GM12878 (cell line): ENCODE measurements at regions of chr1 and their contacts with region 1.

Region 1: DNA sequence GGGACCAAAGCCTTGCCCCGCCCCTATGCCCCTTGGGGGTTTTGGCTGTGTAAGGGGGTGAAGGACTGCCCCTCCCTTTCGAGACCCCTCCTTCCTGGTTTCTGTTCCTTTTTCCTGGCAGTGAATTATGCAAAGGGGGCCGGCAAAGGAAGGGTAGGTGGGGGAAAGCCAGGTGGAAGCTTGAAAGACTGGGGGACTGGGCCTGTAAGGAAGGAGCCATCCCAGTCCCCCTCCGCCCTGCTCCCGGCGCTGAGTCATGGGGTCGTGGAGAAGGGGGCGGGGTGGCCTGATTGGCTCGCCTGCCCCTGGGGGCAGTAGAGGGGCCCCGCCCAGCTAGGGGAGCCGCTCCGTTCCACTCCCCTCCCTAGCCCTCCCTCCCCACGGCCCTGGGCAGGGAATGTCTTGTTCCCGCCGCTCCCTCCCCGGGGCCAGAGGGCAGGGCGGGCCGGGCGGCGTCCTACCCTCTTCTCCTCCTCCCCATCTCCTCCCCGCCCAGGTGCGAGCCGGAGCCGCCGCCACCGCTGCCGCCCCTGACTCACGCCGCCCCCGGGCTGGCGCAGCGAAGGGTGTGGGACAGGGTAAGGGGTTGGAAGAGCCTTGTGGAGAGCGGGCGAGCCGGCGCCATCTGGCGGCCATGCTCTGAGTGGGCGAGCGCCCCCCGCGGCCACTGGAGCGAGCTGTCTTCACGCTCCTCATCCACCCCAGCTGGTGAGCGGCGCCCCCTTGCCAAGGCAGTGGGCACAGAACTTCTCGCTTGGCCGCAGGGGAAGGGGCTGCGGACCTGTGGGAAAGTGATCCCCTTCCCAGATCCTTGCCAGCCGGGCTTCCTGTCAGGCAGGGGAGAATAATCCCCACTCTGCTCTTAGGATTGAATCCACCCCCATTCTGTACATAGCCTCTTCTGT is 14.7 kb downstream of the ZBTB7B start:
- DNase-seq: peak; percentile 47
- ATAC-seq: peak; percentile 98
- H3K4me3 ChIP-seq: peak overlapping the region; percentile 65
- H3K27ac ChIP-seq: peak overlapping the region; percentile 75
- H3K4me1 ChIP-seq: peaks cover 23% of the 10 kb centered on the region
- H3K27me3 ChIP-seq: no peaks in the 10 kb centered on the region
- CTCF ChIP-seq: peak; percentile 99 to 100 (median 100); a peak in 5 of 6 replicates
- EP300 ChIP-seq: 0 out of 4 replicates have a peak, but pooled peaks of 1 of the 2 experiments have one; percentile 26
- POLR2A ChIP-seq: peak; percentile 69
- RAD21 ChIP-seq: peak; percentile 64

Region 2: DNA sequence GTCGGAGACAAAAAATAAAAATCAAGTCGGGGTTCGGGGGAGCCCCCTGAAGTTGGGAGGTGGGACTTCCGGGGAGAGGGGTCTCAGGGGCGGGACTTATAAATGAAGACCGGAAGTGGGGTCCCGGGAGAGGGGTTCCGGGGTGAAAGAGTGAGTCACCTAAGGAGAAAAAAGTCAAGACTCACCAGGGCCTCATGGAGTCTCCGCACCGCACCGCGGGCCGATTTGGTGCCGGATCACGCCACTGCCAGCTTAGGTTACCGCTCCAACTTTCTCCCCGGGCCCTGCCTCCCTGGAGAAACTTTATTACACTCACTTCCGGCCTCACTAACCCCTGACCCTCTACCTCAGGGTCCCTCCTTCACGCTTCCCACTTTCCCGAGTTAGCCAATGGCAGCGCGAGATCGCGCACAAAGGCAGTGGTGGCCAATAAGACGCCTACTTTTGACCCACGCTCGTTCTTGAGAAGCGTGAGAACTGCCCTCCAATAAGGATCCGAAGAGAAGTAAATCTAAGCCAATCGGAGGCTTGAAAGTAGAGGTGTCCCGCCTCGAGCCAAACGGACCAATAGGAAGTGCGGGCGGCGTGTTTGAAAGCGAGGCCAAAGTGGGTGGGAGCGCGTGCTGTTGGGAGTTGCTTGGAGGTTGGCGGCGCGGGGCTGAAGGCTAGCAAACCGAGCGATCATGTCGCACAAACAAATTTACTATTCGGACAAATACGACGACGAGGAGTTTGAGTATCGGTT is 43.1 kb before region 1 on chr1 and contains the start of gene CKS1B:
- CTCF ChIA-PET with region 1: interaction called, 17 read pairs
- POLR2A ChIA-PET with region 1: interaction called, 7 read pairs
- RAD21 ChIA-PET with region 1: interaction called, 8 read pairs
- SMC1A ChIA-PET with region 1: interaction called, 4 read pairs
- in situ Hi-C with region 1: no loop called
- intact Hi-C with region 1: no loop called
- DNase-seq: peak; percentile 100
- ATAC-seq: peak; percentile 87
- H3K4me3 ChIP-seq: peak within 1 kb of the TSS; percentile 90
- H3K27ac ChIP-seq: peak within 1 kb of the TSS; percentile 96
- H3K4me1 ChIP-seq: peaks cover 28% of the 10 kb centered on the region
- H3K27me3 ChIP-seq: no peaks in the 10 kb centered on the region
- CTCF ChIP-seq: no peak
- EP300 ChIP-seq: no peak
- POLR2A ChIP-seq: peak; percentile 85
- RAD21 ChIP-seq: no peak
- polyA plus RNA-seq, gene CKS1B: 598 to 608 TPM

Region 3: DNA sequence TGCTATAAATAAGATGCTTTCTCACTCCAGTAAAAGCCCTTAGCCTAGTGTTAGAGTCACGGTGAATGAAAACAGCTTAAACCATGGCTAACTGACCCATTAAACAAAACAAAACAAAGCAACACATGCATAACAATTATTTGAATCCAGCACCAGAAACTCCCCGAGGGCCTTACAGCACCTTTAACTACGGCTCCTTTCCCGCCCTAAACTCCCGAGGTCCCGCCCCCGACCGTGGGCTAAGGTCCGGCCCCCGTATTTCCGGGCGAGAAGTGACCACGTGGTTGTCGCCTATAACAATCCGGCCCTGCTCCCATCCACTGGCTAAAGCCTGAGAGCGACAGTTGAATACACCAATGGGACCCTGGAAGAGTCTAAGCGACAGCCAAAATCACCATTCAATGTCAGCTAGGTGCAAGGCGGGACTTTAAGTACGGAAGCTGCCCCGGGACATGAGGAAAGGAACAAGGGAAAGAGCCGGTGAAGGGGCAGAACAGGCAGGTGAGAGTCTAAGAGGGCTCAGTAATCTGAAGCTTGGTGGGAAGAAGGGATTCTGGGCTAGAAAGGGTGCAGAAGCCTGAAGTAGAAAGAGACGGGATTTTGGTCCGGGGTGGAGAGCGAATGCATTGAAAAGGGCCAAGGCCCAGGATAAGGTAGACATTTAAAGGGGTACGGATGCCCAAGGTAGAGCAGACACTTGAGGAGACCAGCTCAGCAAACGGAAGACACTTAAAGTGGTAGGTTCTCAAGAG is 34.2 kb before region 1 on chr1 and contains the start of gene FLAD1:
- CTCF ChIA-PET with region 1: interaction called, 22 read pairs
- POLR2A ChIA-PET with region 1: interaction called, 11 read pairs
- RAD21 ChIA-PET with region 1: interaction called, 5 read pairs
- SMC1A ChIA-PET with region 1: interaction called, 10 read pairs
- in situ Hi-C with region 1: no loop called
- intact Hi-C with region 1: loop called (anchors 2 kb)
- DNase-seq: peak; percentile 100
- ATAC-seq: peak; percentile 100
- H3K4me3 ChIP-seq: peak within 1 kb of the TSS; percentile 96
- H3K27ac ChIP-seq: peak within 1 kb of the TSS; percentile 79
- H3K4me1 ChIP-seq: peaks cover 6% of the 10 kb centered on the region
- H3K27me3 ChIP-seq: no peaks in the 10 kb centered on the region
- CTCF ChIP-seq: no peak
- EP300 ChIP-seq: no peak
- POLR2A ChIP-seq: peak; percentile 66
- RAD21 ChIP-seq: no peak
- polyA plus RNA-seq, gene FLAD1: 22.9 to 30.1 TPM